GM10248 (cell line): ENCODE measurements at regions of chr5 and their contacts with region 1.

Region 1: GRCh38 chr5:83048277-83048676 is 28.9 kb downstream of the TMEM167A start:
- DNase-seq: no peak
- CTCF ChIP-seq: no peak

Region 2: GRCh38 chr5:83035373-83036101 is 12.7 kb before region 1 on chr5:
- CTCF ChIA-PET with region 1: interaction called, 11 read pairs
- POLR2A ChIA-PET with region 1: no interaction called
- DNase-seq: no peak
- CTCF ChIP-seq: no peak